HEK293T (cell line): ENCODE measurements at regions of chr12 and their contacts with region 1.

Region 1: GRCh38 chr12:110431957-110432587 is 18.1 kb downstream of the ARPC3 start:
- DNase-seq: no peak

Region 2: DNA sequence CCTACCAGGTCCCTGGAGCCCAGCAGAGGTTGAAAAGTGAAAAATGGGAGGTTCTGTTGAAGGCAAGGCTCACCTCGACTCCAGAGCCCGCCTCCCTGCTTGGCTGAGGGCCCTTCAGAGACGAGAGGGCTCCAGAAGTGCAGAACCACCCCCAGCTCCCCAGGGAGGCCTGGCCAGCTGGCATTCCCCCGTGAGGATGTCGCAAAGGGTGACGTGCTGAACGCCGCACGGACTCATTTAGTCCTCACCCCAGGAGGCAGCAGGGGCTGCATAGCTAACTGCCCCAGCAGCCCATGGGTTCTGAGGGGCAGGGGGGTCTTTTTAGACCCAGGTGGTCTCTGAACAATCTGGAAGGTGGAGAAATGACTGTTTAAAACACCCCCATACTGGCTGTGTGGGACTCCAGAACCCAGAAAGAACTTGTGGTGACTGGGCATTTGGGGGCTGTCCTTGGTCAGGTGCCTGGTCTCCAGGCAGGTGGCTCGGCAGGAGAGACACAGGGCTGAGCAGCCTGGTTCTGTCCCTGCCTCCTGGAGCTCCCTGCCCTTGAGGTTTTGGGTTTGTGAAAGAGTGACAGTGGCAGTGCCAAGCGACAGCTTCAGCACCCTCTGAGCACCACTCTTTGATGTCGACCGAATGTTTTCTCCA is 60.5 kb before region 1 on chr12:
- CTCF ChIA-PET with region 1: interaction called, 21 read pairs
- POLR2A ChIA-PET with region 1: interaction called, 3 read pairs
- DNase-seq: no peak

Region 3: GRCh38 chr12:110403146-110403975 is 28.7 kb before region 1 on chr12 and contains the start of gene ANAPC7:
- CTCF ChIA-PET with region 1: interaction called, 7 read pairs
- POLR2A ChIA-PET with region 1: interaction called, 12 read pairs
- DNase-seq: peak; percentile 91

Region 4: DNA sequence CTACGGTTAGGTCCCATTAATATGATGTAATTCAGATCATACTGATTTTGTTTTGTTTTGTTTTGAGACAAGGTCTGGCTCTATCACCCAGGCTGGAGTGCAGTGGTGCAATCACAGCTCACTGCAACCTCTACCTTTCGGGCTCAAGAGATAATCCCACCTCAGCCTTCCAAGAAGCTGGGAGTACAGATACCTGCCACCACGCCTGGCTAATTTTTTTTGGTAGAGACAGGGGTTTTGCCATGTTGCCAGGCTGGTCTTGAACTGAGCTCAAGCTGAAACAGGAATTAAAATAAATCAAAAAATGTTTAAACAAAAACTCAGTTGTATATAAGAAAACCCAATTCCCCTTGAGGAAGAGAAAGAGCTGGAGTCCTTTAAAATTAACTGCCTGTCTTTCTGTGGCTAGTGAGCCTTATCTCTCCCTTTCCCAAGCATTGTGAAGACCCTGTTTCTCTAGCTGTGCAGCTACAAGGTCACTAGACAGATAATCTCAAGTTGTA is 10.9 kb before region 1 on chr12:
- CTCF ChIA-PET with region 1: interaction called, 34 read pairs
- POLR2A ChIA-PET with region 1: interaction called, 3 read pairs
- DNase-seq: no peak

Region 5: DNA sequence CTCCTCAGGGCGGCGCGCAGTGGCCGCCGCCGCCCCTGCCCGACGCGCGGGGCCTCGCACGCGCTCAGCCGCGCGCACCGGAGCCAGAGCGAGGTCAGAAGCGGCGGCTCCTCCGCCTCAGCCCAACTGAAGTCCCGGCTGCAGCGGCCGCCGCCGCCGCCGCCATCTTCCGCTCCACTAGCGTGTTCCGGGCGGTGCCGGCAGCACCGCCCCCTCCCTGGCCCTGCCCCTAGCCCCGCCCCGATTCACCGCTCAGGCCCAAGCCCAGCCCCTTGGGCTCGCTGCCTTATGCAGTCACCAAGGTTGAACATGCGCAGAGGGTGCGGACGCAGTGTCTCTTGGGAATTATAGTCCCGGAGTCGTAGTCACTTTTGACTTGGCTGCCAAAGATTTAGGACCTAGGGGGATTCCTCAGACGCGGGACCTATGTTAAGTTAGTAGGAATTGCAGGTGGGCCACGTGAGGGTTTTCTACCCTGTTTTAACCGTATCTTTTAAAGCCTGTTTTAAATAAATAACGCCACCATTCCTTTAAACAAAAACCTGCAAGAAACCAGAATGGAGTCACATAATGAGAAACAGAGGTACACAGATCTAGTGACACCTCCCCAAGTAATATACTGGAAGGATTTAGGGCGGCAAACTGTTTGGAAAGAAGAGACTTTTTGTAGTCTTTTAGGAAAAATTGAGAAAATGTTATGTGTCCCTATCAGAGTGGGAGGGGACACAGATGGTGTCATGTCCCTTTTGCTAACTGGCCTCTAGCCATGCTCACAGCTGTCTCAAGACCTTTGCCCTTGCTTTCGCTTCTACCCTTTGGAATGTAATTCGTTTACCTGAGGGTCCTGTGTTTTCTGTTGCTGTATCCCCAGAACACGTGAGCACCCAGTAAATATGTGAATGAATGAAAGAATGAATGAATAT is 151.3 kb after region 1 on chr12 and contains the start of gene PPTC7:
- CTCF ChIA-PET with region 1: no interaction called
- POLR2A ChIA-PET with region 1: no interaction called
- DNase-seq: peak; percentile 97